ENCODE measurements at regions of chr4 and their contacts with region 1.

Region 1: DNA sequence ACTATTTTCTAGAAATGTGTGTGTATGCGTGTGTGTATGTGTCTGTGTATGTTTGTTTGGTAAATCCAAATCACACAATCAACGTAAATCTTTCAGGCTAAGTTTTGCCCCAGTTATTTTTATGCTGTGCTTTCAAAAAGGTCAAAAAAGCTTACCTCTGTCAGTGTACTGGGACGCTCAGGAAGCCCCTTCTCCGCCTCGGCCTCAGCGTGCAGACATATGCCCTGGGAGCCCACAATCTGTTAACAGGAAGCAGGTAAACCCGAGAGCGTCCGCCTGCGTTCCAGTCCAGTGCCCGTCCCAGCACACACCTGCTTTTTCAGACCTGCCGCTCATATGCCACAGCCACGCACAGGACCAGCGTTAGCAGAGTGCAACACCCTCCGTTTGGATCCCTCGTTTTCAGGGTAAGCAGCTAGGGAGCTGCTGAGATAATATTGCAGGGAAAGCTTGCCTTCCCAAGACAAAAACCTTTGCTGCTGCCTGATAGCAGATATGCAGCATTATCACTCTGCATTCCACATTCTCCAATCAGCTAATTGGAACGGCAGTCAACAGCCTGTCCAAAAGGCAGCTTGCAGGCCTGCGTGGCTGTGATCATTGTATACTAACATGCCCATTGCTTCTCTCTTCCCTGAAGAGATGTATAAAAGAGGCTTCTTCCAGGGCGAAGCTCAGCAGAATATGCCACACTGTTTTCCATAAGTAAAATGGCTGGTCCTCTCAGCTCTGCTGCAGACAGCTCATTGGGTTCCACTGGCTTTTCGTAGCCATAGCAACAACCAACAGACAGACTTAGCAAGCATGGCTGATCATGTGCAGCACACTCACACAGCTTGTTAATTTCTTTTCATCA is at the start of gene SORBS2:
- DNase-seq: peak; percentile 48
- H3K4me3 Mint-ChIP-seq: peak within 1 kb of the TSS; percentile 80
- H3K27ac Mint-ChIP-seq: peak within 1 kb of the TSS; percentile 88
- H3K4me1 Mint-ChIP-seq: peaks cover 16% of the 10 kb centered on the region
- H3K27me3 Mint-ChIP-seq: no peaks in the 10 kb centered on the region
- CTCF ChIP-seq: no peak
- total RNA-seq, gene SORBS2: 37.2 and 52.8 TPM in 2 replicates

Region 2: DNA sequence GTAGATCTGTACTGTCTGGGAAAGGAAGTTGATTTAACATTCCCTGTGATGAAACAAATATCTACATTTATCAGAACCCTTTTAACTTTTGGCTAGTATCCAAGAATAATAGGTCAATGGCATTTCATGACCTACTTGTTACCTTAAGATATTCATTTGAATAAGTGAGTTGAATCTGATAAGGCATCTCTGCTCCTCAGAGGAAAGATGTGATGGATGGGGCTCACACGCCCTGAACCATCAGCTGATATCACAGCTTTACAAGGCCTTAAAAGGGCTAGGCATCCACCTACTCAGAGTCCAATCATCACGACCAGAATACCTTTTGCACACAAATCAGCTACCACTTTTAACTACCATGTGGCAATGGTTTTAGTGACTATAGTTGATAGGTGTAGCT is 186.2 kb before region 1 on chr4:
- CTCF ChIA-PET with region 1: no interaction called
- intact Hi-C with region 1: no loop called
- DNase-seq: no peak
- H3K4me3 Mint-ChIP-seq: no peak overlapping the region
- H3K27ac Mint-ChIP-seq: no peak overlapping the region
- H3K4me1 Mint-ChIP-seq: no peaks in the 10 kb centered on the region
- H3K27me3 Mint-ChIP-seq: no peaks in the 10 kb centered on the region
- CTCF ChIP-seq: no peak

Region 3: DNA sequence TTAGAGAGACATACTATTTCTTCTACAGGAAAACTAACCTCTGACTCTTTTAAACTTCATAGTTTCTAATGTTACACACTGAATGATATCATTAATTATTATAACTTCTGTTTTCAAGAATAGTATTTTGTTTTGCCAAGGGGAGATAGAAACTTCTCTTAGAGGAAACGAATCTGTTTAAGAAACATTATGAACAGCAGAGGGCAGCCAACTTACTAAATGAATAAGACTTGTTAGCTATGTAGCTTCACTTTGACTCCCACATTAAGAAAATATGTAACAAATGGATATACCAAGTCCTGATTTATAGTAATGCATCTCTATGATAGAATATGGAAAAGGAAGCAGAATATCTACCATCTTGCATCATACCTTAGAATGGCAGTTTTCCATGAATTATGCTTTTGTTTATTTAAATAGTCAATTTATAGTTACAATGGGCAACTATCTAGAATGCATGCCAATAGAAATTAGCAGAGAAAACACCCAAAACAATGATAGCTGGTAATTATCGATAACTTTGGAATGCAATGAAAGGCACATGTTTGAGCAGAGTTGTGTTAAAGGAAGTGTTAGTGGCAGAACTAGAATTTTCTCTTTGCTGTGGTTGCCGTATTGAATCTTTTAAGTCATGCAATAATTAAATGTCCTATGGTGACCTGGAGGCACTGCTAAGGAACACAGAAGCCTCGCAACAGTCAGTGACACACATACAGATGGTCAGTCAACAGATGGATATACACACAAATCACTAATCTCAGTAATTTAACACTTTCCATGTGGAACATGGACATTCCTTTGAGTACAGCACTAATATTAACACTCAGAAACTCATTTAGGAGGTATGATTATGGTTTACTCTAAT is 170.7 kb before region 1 on chr4:
- CTCF ChIA-PET with region 1: no interaction called
- intact Hi-C with region 1: loop called (anchors 10 kb)
- DNase-seq: no peak
- H3K4me3 Mint-ChIP-seq: no peak overlapping the region
- H3K27ac Mint-ChIP-seq: no peak overlapping the region
- H3K4me1 Mint-ChIP-seq: no peaks in the 10 kb centered on the region
- H3K27me3 Mint-ChIP-seq: no peaks in the 10 kb centered on the region
- CTCF ChIP-seq: no peak

Region 4: DNA sequence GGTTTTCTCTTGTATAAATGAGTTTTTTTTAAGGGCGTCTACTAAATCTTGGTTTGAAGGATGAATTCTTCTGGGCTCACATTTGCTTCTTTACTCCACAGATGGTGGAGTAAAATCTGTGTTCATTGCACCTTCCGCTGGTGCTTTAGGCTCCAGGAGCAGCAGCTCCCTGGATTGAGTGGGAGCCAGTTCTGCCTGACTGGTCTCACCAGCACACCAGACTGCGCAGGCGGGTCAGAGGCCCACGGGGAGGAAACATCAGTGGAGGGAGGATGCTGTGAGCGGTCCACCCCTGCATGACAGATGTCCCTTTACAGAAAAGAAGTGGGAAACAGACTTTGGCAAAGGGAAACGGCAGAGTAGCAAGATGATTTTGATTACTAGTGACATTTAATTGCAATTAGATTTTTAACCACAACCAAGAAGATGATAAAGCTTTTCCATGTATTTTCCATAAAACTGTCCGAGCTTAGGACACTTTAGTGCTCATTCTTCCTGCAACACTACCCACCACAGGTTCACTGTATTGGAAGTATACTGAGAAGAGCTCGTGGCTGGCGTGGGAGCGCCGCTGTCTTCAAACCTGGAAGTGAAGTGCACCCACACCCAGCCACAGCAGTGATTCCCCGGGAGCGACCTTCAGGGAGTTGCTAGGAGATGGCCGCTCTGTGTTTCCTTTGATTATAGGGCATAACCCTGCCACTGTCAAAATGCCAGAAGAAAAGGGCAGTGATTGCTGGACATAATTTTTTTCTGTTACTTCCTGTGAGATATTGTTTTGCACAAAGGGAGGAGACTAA is 95.0 kb before region 1 on chr4:
- CTCF ChIA-PET with region 1: interaction called, 3 read pairs
- intact Hi-C with region 1: loop called (anchors 5 kb)
- DNase-seq: peak; percentile 17
- H3K4me3 Mint-ChIP-seq: peak overlapping the region; percentile 55
- H3K27ac Mint-ChIP-seq: peak overlapping the region; percentile 73
- H3K4me1 Mint-ChIP-seq: peaks cover 74% of the 10 kb centered on the region
- H3K27me3 Mint-ChIP-seq: no peaks in the 10 kb centered on the region
- CTCF ChIP-seq: no peak

Region 5: DNA sequence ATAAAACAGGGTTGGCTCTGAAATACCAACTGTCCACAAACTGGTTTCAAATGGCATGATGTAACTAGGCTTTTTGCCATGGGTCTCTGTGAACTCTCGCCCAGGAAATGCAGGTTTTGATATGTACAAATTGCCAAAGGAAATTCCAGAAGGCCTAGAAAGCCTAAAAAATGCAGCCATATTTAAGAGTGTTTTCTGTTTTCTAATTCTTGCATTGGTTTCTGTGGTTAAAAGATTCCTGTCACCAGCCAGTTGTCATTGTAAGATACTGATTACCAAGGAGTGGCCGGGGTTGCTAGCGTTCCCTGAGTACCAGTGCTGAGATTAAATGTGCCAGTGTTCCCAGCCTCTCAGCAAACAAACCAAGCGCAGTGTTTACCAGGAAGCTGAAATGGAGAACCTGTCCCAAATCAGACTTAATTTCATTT is 54.2 kb after region 1 on chr4:
- CTCF ChIA-PET with region 1: no interaction called
- intact Hi-C with region 1: loop called (anchors 5 kb)
- DNase-seq: peak; percentile 52
- H3K4me3 Mint-ChIP-seq: no peak overlapping the region
- H3K27ac Mint-ChIP-seq: peak overlapping the region; percentile 69
- H3K4me1 Mint-ChIP-seq: peaks cover 54% of the 10 kb centered on the region
- H3K27me3 Mint-ChIP-seq: no peaks in the 10 kb centered on the region
- CTCF ChIP-seq: no peak

Measured in Calu3 (cell line).